Heart right ventricle (tissue), 16 donors: ENCODE measurements at regions of chr16 and their contacts with region 1.

Region 1: DNA sequence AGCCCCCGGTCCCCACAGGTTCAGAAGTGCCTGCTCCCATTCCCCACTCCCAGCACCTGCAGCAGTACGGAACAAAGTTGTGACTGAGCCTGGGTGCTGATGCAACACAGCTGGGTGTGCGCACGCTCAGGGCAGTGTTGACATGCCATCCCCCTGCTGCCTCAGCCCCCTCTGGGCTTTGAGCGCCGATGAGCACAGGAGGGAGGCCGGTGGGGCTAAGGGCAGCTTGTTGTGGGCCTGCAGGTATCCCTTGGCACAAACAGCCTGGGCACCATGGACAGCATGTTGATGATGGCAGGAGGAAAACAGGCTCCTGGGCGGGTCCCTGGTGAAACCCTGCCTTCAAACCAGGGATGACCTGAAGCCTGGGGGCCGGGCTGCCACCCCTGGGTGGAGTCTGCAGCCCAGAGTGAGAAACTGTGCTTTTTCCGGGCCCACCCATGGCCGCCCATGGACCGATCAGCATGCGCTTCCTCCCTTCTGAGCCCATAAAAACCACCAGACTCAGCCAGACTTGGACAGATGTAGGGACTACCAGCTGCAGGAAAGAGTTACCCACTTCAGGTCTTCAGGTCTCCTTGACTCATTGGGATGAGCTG is 175.5 kb downstream of the PHKB start:
- DNase-seq: no peak
- ATAC-seq: peak in 1 of 8 donors; percentile 35
- H3K4me3 ChIP-seq: no peak overlapping the region
- H3K27ac ChIP-seq: no peak overlapping the region
- H3K4me1 ChIP-seq: peaks cover 0 to 8% (median 0%) of the 10 kb centered on the region in 9 donors
- H3K27me3 ChIP-seq: no peaks in the 10 kb centered on the region
- CTCF ChIP-seq: no peak

Region 2: DNA sequence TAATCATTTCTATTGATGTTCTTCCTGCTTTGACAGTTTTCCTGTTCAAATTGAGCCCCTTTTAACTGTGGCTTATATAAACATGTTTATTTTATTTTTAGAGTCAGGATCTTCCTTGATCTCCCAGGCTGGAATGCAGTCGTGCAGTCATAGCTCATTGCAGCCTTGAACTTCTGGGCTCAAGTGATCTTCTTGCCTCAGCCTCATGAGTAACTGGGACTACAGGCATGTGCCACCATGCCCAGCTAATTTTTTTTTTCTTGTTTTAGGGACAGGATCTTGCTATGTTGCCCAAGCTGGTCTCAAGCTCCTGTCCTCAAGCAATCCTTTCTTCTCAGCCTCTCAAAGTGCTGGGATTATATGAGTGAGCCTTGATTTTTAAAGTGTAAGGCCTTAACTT is 160.8 kb before region 1 on chr16:
- intact Hi-C with region 1: loop called in 1 of 10 experiments (anchors 10 kb)
- DNase-seq: no peak
- ATAC-seq: peak in 4 of 8 donors; percentile 37 to 61 (median 58)
- H3K4me3 ChIP-seq: no peak overlapping the region
- H3K27ac ChIP-seq: peak overlapping the region in 6 of 10 donors; percentile 2 to 67 (median 31)
- H3K4me1 ChIP-seq: peaks cover 2 to 56% (median 38%) of the 10 kb centered on the region in 9 donors
- H3K27me3 ChIP-seq: no peaks in the 10 kb centered on the region
- CTCF ChIP-seq: no peak